HepG2 (cell line): ENCODE measurements at regions of chr6 and their contacts with region 1.

Region 1: DNA sequence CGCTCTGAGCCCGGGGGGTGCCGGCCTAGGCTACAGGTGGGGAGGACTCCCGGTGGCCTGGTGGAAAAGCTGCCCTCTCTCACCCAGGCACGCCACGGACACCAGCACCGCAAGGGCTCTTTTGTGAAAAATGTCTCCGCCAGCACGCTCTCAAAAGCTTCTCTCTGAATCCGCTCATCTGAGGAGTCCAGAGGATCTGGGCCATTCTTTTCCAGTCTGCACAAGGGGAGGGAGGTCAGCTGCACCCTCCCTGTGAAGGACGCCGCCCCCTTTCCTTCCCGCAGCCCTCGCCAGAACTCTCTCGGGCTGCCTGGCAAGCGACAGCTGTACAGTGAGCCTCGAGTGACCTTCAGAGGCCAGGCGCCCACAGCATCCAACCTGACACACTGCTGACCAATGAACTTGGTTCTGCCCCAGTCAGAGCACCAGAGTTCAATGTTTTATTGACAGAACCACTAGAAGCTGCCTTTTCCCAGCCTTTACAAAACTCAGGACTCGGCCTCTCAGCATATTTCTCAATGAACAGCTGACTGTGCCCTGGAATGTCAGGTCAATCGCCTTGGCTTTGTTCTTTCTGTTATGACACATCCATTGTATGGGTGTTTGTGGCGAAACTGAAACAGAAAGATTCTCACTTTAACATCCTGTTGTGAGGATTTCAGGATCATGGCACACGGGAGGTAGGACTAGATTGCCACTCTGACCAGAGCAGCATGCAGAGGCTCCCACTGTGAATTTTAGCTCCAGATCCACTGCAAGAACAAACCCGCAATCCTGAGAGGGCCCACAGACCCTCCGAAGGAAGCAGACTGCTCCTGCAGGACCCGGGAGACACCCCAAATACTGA is 26.7 kb downstream of the SERPINB9 start:
- DNase-seq: peak; percentile 100
- ATAC-seq: peak; percentile 97
- H3K4me3 ChIP-seq: peak overlapping the region; percentile 58 to 79 (median 60)
- H3K27ac ChIP-seq: peak overlapping the region; percentile 83
- H3K4me1 ChIP-seq: peaks cover 48% of the 10 kb centered on the region
- H3K27me3 ChIP-seq: no peaks in the 10 kb centered on the region; a peak in 1 of 5 replicates
- CTCF ChIP-seq: peak; percentile 61
- EP300 ChIP-seq: peak; percentile 72 to 96
- POLR2A ChIP-seq: peak; percentile 52 to 54; a peak in 2 of 4 replicates
- RAD21 ChIP-seq: peak; percentile 41; the same call in 1 of the 2 replicates

Region 2: DNA sequence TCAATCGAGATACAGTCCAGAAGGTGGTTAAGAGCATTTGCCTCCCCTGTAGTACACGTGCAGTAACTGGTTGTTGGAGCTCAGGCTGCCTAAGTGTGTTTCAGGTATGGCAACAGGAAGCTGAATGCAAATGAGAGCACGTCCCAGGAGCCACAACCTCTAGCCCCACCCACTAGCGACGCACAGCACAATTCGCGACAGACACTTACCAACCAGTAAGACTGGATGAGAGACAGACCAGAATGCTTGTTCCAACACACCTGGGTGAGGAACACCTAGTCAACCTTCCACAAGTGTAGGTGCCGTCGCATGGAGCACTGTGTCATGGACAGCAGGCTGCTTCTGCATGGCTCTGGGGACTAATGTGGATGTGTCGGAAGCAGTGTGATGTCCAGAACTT is 27.6 kb before region 1 on chr6:
- CTCF ChIA-PET with region 1: no interaction called
- POLR2A ChIA-PET with region 1: interaction called, 22 read pairs
- in situ Hi-C with region 1: no loop called
- intact Hi-C with region 1: loop called (anchors 1 kb)
- DNase-seq: no peak
- ATAC-seq: no peak
- H3K4me3 ChIP-seq: no peak overlapping the region
- H3K27ac ChIP-seq: no peak overlapping the region
- H3K4me1 ChIP-seq: peaks cover 63% of the 10 kb centered on the region
- H3K27me3 ChIP-seq: no peaks in the 10 kb centered on the region
- CTCF ChIP-seq: no peak
- EP300 ChIP-seq: no peak
- POLR2A ChIP-seq: no peak
- RAD21 ChIP-seq: no peak

Region 3: DNA sequence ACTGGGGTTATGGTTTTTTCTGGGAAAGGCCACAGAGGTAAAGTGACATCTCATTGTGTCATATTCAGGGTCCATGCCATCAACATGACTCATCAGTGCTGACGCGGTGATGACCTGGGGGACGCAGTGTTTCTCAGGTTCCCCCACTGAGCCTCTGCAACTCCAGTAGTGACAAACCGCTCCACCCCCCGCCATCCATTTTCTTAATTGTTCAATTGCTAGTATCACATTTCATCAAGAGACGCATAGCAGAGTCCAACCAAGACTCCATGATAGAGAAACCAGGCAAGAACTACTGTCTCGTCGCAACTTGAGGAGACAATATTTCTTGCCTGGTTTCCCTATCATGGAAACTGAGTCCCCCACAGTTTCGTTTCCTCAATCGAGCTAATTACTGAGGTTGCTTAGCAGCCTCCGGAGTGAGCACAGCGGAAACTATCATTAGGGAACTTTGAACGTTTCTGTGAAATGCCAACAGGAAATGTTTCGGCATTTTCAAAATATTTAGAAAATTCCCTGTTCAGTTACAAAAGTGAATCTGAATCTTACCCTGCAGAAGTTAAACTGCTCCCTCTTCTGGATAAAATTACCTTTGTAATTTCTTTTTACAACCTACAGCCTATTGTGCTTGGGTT is 22.6 kb before region 1 on chr6:
- CTCF ChIA-PET with region 1: no interaction called
- POLR2A ChIA-PET with region 1: interaction called, 22 read pairs
- in situ Hi-C with region 1: no loop called
- intact Hi-C with region 1: loop called (anchors 1 kb)
- DNase-seq: peak; percentile 75
- ATAC-seq: peak; percentile 47
- H3K4me3 ChIP-seq: peak overlapping the region; percentile 51 to 60 (median 53)
- H3K27ac ChIP-seq: peak overlapping the region; percentile 65
- H3K4me1 ChIP-seq: peaks cover 91% of the 10 kb centered on the region
- H3K27me3 ChIP-seq: no peaks in the 10 kb centered on the region
- CTCF ChIP-seq: peak; percentile 53; the same call in 1 of the 2 replicates
- EP300 ChIP-seq: peak in 1 of 2 experiments; percentile 8; a peak in 1 of 4 replicates
- POLR2A ChIP-seq: 0 out of 4 replicates have a peak, but pooled peaks of 1 of the 2 experiments have one; percentile 22
- RAD21 ChIP-seq: no peak; the same call in 1 of the 2 replicates

Region 4: DNA sequence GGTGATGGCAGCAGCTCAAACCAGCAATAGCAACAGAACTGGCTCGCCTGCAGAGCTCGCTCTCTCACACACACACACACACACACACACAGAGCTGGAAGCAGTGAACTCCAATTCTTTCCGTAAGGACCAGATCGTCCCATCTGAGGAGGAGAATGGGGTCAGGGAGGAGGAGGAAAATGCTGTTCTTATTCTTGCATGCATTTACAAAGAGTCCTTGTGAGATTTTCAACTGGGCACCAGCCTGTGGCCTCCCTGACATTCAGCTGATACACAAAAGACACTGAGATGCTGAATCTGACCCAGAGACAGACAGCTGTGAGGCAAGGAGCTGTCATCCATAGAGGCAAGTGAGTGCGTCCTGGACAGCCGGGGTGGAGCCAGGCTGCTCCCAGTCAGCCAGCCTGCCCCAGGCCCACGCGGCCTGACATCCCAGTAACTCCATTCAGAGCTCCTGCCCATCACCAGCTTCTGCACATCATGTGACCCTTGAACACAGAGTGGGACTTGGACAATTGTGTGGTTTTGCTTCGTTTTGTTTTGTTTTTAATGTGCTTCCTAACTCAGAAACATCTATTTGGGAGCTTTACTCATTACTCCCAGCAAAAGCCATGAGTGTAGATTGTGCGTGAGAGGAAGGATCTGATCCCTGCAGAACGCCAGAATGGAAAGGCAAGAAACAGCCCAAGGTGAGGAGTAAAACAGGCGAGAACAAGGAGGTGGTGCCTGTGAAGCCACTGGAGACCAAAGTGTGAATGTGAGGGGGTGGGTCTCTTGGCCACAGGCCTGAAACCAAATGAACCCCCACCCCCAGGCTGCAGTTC is 24.6 kb after region 1 on chr6:
- CTCF ChIA-PET with region 1: no interaction called
- POLR2A ChIA-PET with region 1: interaction called, 55 read pairs
- in situ Hi-C with region 1: no loop called
- intact Hi-C with region 1: loop called (anchors 1 kb)
- DNase-seq: no peak
- ATAC-seq: no peak
- H3K4me3 ChIP-seq: peak overlapping the region in 1 of 3 experiments; percentile 89; a peak in 1 of 6 replicates
- H3K27ac ChIP-seq: no peak overlapping the region
- H3K4me1 ChIP-seq: peaks cover 28% of the 10 kb centered on the region
- H3K27me3 ChIP-seq: peaks cover 0 to 8% of the 10 kb centered on the region in 2 experiments; a peak in 1 of 5 replicates
- CTCF ChIP-seq: no peak
- EP300 ChIP-seq: no peak
- POLR2A ChIP-seq: no peak
- RAD21 ChIP-seq: no peak

Region 5: GRCh38 chr6:2911171-2911570 is 34.7 kb after region 1 on chr6:
- CTCF ChIA-PET with region 1: no interaction called
- POLR2A ChIA-PET with region 1: interaction called, 7 read pairs
- in situ Hi-C with region 1: no loop called
- intact Hi-C with region 1: loop called (anchors 2 kb)
- DNase-seq: no peak
- ATAC-seq: no peak
- H3K4me3 ChIP-seq: no peak overlapping the region
- H3K27ac ChIP-seq: no peak overlapping the region
- H3K4me1 ChIP-seq: peaks cover 35% of the 10 kb centered on the region
- H3K27me3 ChIP-seq: peaks cover 0 to 20% of the 10 kb centered on the region in 2 experiments; a peak in 4 of 5 replicates
- CTCF ChIP-seq: no peak
- EP300 ChIP-seq: no peak
- POLR2A ChIP-seq: no peak
- RAD21 ChIP-seq: no peak

Region 6: DNA sequence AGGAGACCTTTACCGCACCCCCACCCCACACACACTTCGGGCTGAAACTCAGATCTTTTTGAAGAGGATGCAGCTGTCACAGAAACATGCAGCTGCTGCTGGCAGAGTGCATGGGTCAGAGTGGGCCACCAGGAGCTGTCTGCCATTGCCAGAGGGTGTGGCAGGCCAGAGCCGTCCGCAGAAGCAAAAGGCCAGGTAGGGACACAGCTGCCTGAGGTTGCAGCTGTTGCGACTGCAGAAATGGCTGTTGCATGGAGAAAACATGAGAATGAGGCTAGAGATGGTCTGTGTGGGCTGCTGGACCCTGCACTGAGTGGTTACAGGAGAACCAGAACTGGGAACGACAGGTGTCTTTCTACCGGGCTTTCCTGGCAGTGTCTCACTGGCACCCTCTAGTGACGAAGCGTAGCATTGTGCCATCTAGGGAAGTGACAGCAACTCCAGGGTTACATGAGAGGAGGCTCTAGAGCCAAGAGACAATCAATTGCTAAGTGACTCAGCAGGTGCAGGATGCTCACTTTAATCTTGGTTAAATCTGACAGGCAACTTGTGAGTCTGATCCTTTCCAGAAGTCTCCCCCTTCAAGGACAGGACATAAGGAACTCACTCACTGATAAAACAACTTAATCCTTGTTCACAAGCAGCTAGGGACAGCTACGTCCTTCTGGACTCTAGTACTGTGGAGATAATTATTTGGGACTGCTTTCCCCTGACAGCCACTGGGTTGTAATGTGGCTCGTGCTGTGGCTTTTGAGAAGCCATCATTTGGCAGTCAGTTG is 55.7 kb after region 1 on chr6:
- CTCF ChIA-PET with region 1: interaction called, 4 read pairs
- POLR2A ChIA-PET with region 1: interaction called, 3 read pairs
- in situ Hi-C with region 1: no loop called
- intact Hi-C with region 1: loop called (anchors 1 kb)
- DNase-seq: peak; percentile 85
- ATAC-seq: peak; percentile 99
- H3K4me3 ChIP-seq: peak overlapping the region in 1 of 3 experiments; percentile 63; a peak in 2 of 6 replicates
- H3K27ac ChIP-seq: no peak overlapping the region
- H3K4me1 ChIP-seq: peaks cover 10% of the 10 kb centered on the region
- H3K27me3 ChIP-seq: peaks cover 0 to 3% of the 10 kb centered on the region in 2 experiments; a peak in 2 of 5 replicates
- CTCF ChIP-seq: peak; percentile 99
- EP300 ChIP-seq: no peak
- POLR2A ChIP-seq: no peak
- RAD21 ChIP-seq: peak; percentile 96

Region 7: GRCh38 chr6:2999618-3000557 is 123.5 kb after region 1 on chr6 and contains the start of gene NQO2:
- CTCF ChIA-PET with region 1: no interaction called
- POLR2A ChIA-PET with region 1: interaction called, 12 read pairs
- in situ Hi-C with region 1: no loop called
- intact Hi-C with region 1: no loop called
- DNase-seq: peak; percentile 76
- ATAC-seq: peak; percentile 79
- H3K4me3 ChIP-seq: peak within 1 kb of the TSS; percentile 91 to 100 (median 100)
- H3K27ac ChIP-seq: peak within 1 kb of the TSS; percentile 92
- H3K4me1 ChIP-seq: peaks cover 44% of the 10 kb centered on the region
- H3K27me3 ChIP-seq: no peaks in the 10 kb centered on the region; a peak in 1 of 5 replicates
- CTCF ChIP-seq: peak; percentile 27; the same call in 1 of the 2 replicates
- EP300 ChIP-seq: 0 out of 4 replicates have a peak, but pooled peaks of 1 of the 2 experiments have one; percentile 14
- POLR2A ChIP-seq: peak; percentile 95 to 98
- RAD21 ChIP-seq: peak; percentile 58
- total RNA-seq, gene NQO2: 56.5 and 63.0 TPM in 2 replicates